Activated T-helper 1 cell treated with anti-CD3 and anti-CD28 coated beads, Interleukin-12 subunit alpha, Interleukin-12 subunit beta, Interleukin-2, Interleukin-4 antibody, amounts not matched to agents 30 ng/mL and 10 ng/mL and 1 ng/mL, durations not matched to agents 14 hours and 24 hours and 36 hours (primary cell): ENCODE measurements at regions of chr11 and their contacts with region 1.

Region 1: GRCh38 chr11:110429731-110430266 is at the start of gene FDX1:
- DNase-seq: peak; percentile 82
- H3K4me3 Mint-ChIP-seq: peak within 1 kb of the TSS; percentile 99
- H3K27ac Mint-ChIP-seq: peak within 1 kb of the TSS; percentile 98
- H3K4me1 Mint-ChIP-seq: peaks cover 51% of the 10 kb centered on the region
- H3K27me3 Mint-ChIP-seq: no peaks in the 10 kb centered on the region
- total RNA-seq, gene FDX1: 14.2 and 15.9 TPM in 2 replicates

Region 2: GRCh38 chr11:109971184-109971523 is 458.6 kb before region 1 on chr11:
- intact Hi-C with region 1: loop called (anchors 10 kb)
- DNase-seq: no peak
- H3K4me3 Mint-ChIP-seq: peak overlapping the region; percentile 57
- H3K27ac Mint-ChIP-seq: peak overlapping the region; percentile 82
- H3K4me1 Mint-ChIP-seq: peaks cover 45% of the 10 kb centered on the region
- H3K27me3 Mint-ChIP-seq: peaks cover 7% of the 10 kb centered on the region

Region 3: GRCh38 chr11:110092515-110093404 is 337.0 kb before region 1 on chr11 and contains the start of gene ZC3H12C:
- intact Hi-C with region 1: loop called (anchors 5 kb)
- DNase-seq: peak; percentile 47
- H3K4me3 Mint-ChIP-seq: peak within 1 kb of the TSS; percentile 87
- H3K27ac Mint-ChIP-seq: peak within 1 kb of the TSS; percentile 93
- H3K4me1 Mint-ChIP-seq: peaks cover 16% of the 10 kb centered on the region
- H3K27me3 Mint-ChIP-seq: peaks cover 56% of the 10 kb centered on the region
- total RNA-seq, gene ZC3H12C: 5.7 and 6.2 TPM in 2 replicates

Region 4: DNA sequence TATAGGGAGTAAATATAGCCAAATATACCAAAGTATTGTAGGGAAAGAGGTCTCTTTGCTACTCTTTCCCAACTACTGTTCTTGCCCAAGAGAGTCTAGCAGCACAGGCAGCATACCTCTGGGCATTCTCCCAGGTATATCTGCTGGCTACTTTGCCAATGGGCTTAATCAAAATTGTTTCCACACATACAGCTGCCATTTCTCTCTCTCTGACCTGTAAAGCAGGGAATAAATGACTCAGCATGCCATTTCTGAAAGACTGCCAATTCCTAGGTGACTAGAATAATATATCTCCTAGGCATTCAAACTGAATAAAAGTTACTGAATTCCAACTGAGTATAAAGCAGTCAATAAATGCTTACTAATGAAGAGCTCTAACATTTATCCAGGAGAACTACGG is 178.0 kb before region 1 on chr11:
- intact Hi-C with region 1: loop called (anchors 5 kb)
- DNase-seq: no peak
- H3K4me3 Mint-ChIP-seq: no peak overlapping the region
- H3K27ac Mint-ChIP-seq: peak overlapping the region; percentile 40
- H3K4me1 Mint-ChIP-seq: peaks cover 14% of the 10 kb centered on the region
- H3K27me3 Mint-ChIP-seq: no peaks in the 10 kb centered on the region

Region 5: GRCh38 chr11:110296226-110297075 is 133.3 kb before region 1 on chr11 and contains the start of gene RDX:
- intact Hi-C with region 1: loop called (anchors 1 kb)
- DNase-seq: peak; percentile 63
- H3K4me3 Mint-ChIP-seq: peak within 1 kb of the TSS; percentile 86
- H3K27ac Mint-ChIP-seq: peak within 1 kb of the TSS; percentile 65
- H3K4me1 Mint-ChIP-seq: peaks cover 54% of the 10 kb centered on the region
- H3K27me3 Mint-ChIP-seq: no peaks in the 10 kb centered on the region
- total RNA-seq, gene RDX: 94.6 and 98.9 TPM in 2 replicates

Region 6: DNA sequence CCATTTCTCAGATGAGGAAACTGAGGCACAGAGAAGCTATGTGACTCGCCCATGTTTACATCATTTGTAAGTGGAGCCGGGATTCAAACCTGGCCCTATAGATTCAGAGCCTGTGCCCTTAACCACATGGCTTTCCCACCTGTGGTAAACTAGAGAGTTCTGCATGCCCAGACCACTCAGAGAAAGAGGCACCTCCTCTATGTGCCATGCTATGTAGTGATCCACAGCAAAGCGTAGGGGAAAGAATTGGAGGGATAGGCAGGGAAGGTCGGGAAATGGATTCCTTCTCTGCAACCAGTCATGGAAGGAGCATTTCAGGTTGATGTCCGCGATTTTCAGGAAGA is 800.3 kb after region 1 on chr11:
- intact Hi-C with region 1: loop called (anchors 2 kb)
- DNase-seq: no peak
- H3K4me3 Mint-ChIP-seq: peak overlapping the region; percentile 67
- H3K27ac Mint-ChIP-seq: no peak overlapping the region
- H3K4me1 Mint-ChIP-seq: peaks cover 31% of the 10 kb centered on the region
- H3K27me3 Mint-ChIP-seq: peaks cover 12% of the 10 kb centered on the region